Cardiac septum (tissue), 1 donor: ENCODE measurements at regions of chr7 and their contacts with region 1.

Region 1: DNA sequence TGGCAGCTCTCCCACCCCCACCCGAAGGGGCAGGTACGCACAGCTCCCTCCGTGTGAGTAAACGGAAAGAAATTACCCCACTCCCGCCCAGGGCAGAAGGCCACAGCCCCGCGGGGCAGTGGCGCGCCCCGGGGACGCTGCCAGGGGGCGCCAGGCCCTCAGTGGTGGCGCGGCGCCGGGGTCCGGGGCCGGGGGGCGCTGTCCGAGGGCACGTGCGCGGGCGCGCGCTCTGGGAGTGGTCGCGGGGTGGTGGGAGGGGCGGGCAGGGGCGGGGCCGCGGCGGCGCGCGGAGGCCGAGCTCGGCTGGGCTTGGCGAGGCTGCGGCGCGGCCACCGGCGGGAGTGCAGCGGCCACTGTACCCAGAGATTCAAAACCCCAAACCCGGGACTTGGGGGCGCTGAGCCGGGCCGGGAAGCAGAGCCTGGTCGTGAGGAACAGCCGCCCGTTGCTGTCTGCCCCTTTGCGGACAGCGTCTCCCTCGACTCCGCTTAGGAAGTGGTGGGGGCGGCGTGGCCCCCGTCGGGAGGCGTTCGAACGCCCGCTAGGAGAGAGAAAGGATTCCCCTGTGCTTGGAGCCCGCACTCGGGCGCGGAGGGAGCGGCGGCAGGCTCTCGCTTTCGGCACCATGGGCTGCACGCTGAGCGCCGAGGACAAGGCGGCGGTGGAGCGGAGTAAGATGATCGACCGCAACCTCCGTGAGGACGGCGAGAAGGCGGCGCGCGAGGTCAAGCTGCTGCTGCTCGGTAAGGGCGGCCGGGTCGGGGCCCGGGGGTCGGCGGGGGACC is at the start of gene GNAI1:
- DNase-seq: peak; percentile 78
- total RNA-seq, gene GNAI1: 11.3 TPM

Region 2: GRCh38 chr7:80047856-80048459 is 86.8 kb before region 1 on chr7:
- intact Hi-C with region 1: no loop called
- DNase-seq: no peak

Region 3: DNA sequence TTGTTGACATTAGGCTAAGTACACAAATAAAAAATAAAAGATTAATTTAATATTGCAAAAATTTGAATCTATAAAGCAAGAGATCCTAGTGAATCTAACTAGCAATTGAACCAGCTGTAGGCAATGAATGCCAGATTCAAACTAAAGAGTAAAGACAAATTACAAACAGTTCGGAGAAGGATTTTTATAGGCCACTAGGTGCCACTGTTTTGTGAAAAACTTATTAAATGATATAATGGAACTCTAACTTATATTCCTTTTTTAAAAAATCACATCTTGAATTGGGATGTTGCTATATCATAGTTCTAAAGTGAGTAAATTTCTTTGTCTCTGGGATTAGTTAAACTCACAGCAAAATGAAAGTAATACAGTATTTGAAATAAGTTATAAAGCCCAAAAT is 39.2 kb before region 1 on chr7:
- intact Hi-C with region 1: no loop called
- DNase-seq: no peak

Region 4: GRCh38 chr7:80231707-80232106 is 97.0 kb after region 1 on chr7:
- intact Hi-C with region 1: no loop called
- DNase-seq: no peak

Region 5: GRCh38 chr7:80277434-80278427 is 143.0 kb after region 1 on chr7:
- intact Hi-C with region 1: loop called (anchors 5 kb)
- DNase-seq: no peak

Region 6: DNA sequence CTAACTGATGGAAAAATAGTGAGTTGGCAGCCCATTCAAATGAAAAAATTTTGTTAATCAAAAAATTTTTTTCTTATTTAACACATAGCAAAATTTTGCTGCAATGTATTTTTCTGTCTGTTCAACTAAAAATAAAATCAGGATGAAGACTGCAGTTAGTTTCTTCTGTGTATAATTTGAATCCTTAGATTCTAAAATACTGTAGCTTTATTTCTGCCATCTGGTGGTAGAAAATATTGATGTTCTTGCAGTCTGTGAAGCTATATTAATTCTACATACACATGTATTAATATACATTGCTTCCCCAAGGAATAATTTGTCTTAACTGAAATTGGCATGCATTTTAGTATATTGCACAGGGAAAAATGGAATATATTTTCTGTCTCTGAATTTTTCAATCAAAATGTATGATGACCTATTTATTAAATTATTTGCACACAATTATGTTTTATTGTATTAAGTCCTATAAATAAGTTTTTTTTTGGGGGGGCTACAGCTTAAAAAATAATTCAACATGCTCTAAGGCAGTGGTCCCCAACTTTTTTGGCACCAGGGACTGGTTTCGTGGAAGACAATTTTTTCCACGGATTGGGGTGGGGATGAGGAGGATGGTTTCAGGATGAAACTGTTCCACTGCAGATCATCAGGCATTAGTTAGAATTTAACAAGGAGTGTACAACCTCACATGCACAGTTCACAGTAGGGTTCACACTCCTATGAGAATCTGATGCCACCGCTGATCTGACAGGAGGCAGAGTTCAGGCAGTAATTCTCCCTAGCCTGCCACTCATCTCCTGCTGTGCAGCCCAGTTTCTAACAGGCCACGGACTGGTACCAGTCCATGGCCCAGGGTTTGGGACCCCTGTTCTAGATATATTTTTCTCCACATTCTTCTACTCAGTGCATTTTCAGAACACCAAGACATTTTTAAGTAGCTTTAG is 257.8 kb after region 1 on chr7:
- intact Hi-C with region 1: loop called (anchors 10 kb)
- DNase-seq: no peak

Region 7: GRCh38 chr7:80659120-80660055 is 524.7 kb after region 1 on chr7:
- intact Hi-C with region 1: loop called (anchors 10 kb)
- DNase-seq: no peak